ENCODE measurements at regions of chr13 and their contacts with region 1.

Region 1: DNA sequence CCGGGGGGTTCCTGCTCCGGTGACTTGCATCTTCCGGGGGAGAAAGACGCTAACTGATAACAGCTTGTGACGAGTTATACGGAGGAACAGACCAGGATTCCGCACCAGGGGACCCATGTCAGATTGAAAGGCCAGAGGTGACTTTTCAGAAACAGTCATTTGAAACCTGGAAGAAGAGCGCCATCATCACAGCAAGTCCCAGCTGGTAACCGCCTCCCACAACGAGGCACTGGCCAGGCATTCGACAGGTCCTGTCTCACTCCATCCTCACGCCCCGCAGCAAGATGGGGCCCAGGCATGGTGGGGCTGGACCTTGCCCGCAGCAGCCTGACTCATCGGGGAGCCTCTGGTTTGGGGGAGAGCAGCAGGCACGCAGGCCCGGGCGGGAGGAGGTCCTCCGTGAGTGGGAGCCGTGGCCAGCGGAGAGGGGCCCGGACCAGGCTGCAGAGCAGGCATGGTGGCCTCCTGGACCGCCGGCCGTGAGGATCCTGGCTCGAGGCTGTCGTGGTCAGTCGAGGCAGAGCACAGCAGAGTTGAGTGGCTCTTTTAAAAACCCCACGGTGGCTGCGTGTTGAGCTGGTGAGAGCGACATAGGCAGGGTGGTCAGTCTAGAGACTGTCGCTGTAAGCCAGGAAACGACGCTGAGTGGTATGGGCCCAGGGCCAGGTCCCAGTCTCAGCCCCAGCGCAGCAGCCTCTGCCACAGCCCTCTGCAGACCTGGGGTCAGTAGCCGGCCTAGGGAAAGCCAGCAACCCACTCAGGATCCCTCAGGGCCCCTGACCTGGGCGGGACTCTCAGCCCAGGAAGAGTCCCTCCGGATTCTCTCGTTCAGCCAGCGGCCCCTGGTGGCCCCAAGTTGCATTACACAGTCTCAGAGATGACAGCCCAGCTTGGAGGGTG is 94.9 kb upstream of the MCF2L start:
- DNase-seq: peak; percentile 24
- H3K4me3 Mint-ChIP-seq: no peak overlapping the region
- H3K27ac Mint-ChIP-seq: peak overlapping the region; percentile 90
- H3K4me1 Mint-ChIP-seq: peaks cover 12% of the 10 kb centered on the region
- H3K27me3 Mint-ChIP-seq: no peaks in the 10 kb centered on the region

Region 2: GRCh38 chr13:112616586-112617362 is 257.3 kb before region 1 on chr13:
- intact Hi-C with region 1: loop called (anchors 1 kb)
- DNase-seq: no peak
- H3K4me3 Mint-ChIP-seq: no peak overlapping the region
- H3K27ac Mint-ChIP-seq: no peak overlapping the region
- H3K4me1 Mint-ChIP-seq: no peaks in the 10 kb centered on the region
- H3K27me3 Mint-ChIP-seq: peaks cover 7% of the 10 kb centered on the region

Region 3: DNA sequence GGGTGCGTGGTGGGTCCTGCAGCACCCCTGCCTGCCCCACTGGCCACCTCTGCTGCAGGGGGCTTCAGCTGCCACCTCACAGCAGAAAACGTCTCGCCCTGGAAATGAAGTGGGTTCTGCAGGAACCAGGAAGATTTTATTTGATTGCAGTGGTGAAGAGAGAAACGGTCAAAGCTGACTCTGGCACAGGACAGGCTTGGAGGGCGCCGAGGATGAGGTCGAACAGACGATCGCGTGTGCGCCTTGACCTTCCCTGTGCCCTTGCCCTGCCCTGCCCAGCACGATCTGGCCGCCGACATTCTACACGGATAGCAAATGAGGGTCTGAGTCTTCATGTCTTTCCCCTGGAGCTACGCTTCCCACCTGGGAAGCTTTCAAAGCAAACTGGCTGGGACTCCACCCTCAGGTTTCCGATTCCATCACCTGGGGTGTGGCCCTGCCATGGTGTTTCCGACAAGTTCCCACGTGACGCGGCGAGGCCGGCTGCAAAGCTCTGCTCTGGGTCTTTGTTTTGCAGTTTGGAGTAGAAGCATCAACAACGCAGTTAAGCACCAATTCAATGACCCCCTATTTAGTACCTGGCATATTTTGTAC is 235.8 kb before region 1 on chr13:
- intact Hi-C with region 1: loop called (anchors 1 kb)
- DNase-seq: no peak
- H3K4me3 Mint-ChIP-seq: no peak overlapping the region
- H3K27ac Mint-ChIP-seq: no peak overlapping the region
- H3K4me1 Mint-ChIP-seq: peaks cover 7% of the 10 kb centered on the region
- H3K27me3 Mint-ChIP-seq: peaks cover 22% of the 10 kb centered on the region

Region 4: DNA sequence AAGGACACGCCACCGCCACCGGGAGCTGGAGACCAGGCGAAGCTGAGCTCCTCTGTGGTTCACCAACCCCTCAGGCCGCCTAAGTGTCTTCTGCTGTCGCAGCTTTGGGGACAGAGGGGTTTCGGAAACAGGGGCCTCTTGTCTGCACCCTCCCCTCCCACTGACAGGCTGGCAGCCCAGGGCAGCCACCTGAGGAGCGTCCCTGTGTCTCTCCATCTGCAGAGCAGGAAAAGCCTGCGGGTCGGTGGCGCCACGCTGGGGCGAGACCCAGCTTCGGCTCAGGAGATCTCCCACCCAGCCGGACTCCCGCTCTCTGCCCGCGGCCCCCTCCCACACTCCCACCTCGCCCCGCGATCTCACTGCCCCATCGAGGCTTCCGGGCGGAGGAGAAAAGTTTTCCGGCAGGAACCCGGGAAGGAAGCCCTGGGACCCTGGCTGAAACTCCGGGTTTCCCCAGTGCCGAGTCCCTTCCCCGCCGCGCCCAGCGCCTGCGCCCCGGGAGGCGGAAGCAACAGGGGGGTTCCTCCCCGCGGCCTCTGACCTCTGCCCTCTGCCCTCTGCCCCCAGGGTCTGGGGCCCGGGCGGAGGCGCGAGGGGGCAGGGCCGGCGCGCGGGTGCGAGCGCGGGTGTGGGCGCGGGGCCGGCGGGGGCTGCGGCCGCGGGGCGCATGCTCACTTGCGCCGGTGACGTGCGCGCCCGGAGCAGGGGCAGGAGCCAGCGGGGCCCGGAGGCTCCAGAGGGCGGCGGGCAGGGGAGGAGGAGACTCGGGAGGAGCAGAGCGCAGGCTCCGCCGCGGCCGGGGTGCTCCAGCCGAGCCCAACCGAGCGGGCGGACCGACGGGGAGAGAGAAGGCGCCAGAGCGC is 184.6 kb before region 1 on chr13 and contains the start of gene ATP11A:
- intact Hi-C with region 1: loop called (anchors 2 kb)
- DNase-seq: peak; percentile 81
- H3K4me3 Mint-ChIP-seq: peak within 1 kb of the TSS; percentile 84
- H3K27ac Mint-ChIP-seq: peak within 1 kb of the TSS; percentile 94
- H3K4me1 Mint-ChIP-seq: peaks cover 59% of the 10 kb centered on the region
- H3K27me3 Mint-ChIP-seq: no peaks in the 10 kb centered on the region
- total RNA-seq, gene ATP11A: 90.4 and 97.8 TPM in 2 replicates